ENCODE measurements at regions of chr22 and their contacts with region 1.

Region 1: GRCh38 chr22:47154621-47155081 is 392.2 kb downstream of the TBC1D22A start:
- DNase-seq: peak; percentile 67
- H3K4me3 ChIP-seq: peak overlapping the region in 2 of 3 experiments; percentile 6 to 20
- H3K27ac ChIP-seq: no peak overlapping the region
- H3K4me1 ChIP-seq: peaks cover 14% of the 10 kb centered on the region
- H3K27me3 ChIP-seq: no peaks in the 10 kb centered on the region
- CTCF ChIP-seq: peak in 1 of 2 donors; percentile 18

Region 2: DNA sequence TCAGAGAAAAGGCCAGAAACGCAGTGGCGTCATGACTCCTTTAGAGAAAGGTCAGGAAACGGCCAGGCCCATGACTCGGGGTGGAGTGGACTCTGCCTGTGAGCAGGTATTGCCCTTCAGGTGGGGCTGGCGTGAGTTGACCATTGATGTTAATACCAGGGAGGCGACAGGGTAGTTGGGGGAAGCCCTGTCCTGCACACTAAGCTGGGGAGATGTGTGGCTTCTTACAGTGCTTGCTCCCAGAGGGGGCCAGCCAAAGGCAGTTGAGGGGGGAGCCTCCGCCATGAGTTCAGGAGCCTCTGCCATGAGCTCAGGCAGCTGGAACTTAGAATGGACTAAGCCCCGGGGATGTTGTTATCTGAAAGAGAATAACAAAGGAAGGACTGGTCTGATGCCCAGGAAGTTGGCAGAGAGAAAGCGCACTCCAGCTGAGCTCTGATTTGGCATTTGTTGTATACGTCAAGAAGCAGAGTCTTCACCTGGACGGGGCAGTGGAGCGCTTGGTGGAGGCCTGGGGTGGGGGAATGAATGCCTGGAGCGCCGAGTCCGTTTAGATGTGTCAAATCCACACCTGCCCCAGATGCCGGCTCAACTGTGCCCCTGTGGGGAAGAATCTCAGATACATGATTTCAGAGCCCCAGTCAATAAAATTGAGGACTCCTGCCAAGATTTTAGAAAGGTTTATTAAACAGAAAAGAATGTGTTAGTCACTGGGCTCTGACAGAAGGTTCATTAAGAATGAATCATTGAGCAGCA is 169.7 kb before region 1 on chr22:
- CTCF ChIA-PET with region 1: no interaction called
- dilution Hi-C with region 1: no loop called
- in situ Hi-C with region 1: no loop called
- intact Hi-C with region 1: no loop called
- DNase-seq: peak; percentile 69
- H3K4me3 ChIP-seq: no peak overlapping the region
- H3K27ac ChIP-seq: no peak overlapping the region
- H3K4me1 ChIP-seq: peaks cover 17% of the 10 kb centered on the region
- H3K27me3 ChIP-seq: no peaks in the 10 kb centered on the region
- CTCF ChIP-seq: peak in 1 of 2 donors; percentile 17

Region 3: GRCh38 chr22:47110791-47111443 is 43.7 kb before region 1 on chr22:
- CTCF ChIA-PET with region 1: no interaction called
- dilution Hi-C with region 1: loop called (anchors 5 kb)
- in situ Hi-C with region 1: no loop called
- intact Hi-C with region 1: no loop called
- DNase-seq: no peak
- H3K4me3 ChIP-seq: no peak overlapping the region
- H3K27ac ChIP-seq: no peak overlapping the region
- H3K4me1 ChIP-seq: peaks cover 14% of the 10 kb centered on the region
- H3K27me3 ChIP-seq: no peaks in the 10 kb centered on the region
- CTCF ChIP-seq: no peak

Region 4: GRCh38 chr22:47129902-47130635 is 24.6 kb before region 1 on chr22:
- CTCF ChIA-PET with region 1: no interaction called
- dilution Hi-C with region 1: no loop called
- in situ Hi-C with region 1: no loop called
- intact Hi-C with region 1: loop called (anchors 1 kb)
- DNase-seq: peak; percentile 51
- H3K4me3 ChIP-seq: no peak overlapping the region
- H3K27ac ChIP-seq: no peak overlapping the region
- H3K4me1 ChIP-seq: peaks cover 11% of the 10 kb centered on the region
- H3K27me3 ChIP-seq: no peaks in the 10 kb centered on the region
- CTCF ChIP-seq: no peak